ENCODE measurements at regions of chr1 and their contacts with region 1.

Region 1: DNA sequence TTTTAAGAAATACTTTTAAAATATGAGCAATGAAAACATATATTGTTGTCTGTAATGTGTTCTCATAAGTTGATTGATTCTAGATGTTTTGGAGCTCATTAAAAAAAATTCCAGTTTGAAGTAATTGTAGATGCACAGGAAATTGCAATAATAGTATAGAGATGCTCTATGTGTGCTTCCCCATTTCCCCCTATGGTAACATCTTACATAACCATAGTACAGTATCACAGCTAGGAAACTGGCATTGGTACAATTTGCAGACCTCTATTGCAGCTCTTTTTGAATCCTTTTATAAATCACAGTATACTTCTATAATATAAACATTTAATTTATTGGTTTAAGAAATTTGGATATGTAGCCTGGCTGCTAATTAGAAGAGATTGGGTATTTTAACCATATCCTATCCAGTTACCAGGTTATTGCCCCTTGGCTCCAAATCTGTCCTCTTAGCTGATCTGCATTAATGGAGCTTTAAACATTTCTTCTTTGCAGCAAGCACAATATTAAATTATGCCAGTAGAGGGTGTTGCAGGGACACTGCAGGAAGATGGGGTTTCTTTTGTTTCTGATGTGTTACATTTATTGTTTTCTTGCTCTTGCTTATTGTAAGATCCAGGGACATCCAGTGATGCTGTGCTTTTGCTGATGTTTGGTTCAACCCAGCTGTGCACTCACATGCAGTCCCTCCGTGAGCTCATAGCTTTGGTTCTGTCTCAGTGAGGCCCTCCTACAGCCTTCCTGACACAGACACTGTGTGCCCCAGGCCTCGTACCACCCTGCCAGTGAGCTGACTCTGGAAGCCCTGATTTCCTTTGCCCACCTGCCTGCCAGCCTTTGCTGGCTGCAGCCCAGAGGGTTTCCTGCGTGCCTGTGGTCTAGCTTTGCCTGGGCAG is 103.3 kb downstream of the RABGAP1L start:
- DNase-seq: no peak
- ATAC-seq: peak; percentile 52 to 58
- H3K4me3 ChIP-seq: no peak overlapping the region
- H3K27ac ChIP-seq: peak overlapping the region; percentile 48
- H3K4me1 ChIP-seq: no peaks in the 10 kb centered on the region
- H3K27me3 ChIP-seq: no peaks in the 10 kb centered on the region

Region 2: DNA sequence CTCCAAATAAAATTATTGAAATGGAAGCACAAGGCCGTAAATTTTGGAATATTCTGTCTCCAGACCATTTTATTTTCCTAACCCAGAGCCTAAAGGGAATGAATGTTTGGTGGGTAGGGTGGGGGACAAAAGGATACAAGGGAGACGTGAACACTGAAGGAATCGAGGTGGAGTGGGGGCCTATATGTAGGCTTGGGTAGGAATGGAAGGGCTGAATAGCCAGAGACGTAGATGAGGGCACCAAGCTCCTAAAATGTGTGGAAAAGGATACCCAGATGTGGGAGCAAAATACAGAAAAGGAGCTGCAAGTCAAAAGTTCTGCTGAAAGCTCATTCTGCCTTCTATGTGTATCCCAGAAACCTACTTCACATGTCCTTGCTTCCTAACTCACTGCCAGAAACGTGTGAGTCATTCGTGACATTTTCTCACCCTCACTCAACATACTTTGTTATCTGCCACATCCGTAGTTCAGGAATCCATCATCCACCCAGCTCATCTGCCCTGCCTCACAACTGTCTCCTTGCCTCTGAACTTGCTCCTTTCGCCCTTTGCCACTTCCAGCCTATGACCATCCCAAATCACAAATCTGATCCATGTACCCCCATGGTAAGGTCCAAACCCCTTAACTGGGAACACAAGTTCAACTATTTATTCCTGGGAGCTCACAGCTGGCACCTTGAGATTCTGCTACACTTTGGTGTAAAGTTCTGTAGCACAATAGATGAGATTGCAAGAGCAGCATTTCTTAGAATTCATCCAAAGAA is 869.5 kb before region 1 on chr1:
- intact Hi-C with region 1: no loop called
- DNase-seq: no peak
- ATAC-seq: peak; percentile 71 to 90
- H3K4me3 ChIP-seq: no peak overlapping the region
- H3K27ac ChIP-seq: peak overlapping the region; percentile 80
- H3K4me1 ChIP-seq: no peaks in the 10 kb centered on the region
- H3K27me3 ChIP-seq: no peaks in the 10 kb centered on the region

Region 3: DNA sequence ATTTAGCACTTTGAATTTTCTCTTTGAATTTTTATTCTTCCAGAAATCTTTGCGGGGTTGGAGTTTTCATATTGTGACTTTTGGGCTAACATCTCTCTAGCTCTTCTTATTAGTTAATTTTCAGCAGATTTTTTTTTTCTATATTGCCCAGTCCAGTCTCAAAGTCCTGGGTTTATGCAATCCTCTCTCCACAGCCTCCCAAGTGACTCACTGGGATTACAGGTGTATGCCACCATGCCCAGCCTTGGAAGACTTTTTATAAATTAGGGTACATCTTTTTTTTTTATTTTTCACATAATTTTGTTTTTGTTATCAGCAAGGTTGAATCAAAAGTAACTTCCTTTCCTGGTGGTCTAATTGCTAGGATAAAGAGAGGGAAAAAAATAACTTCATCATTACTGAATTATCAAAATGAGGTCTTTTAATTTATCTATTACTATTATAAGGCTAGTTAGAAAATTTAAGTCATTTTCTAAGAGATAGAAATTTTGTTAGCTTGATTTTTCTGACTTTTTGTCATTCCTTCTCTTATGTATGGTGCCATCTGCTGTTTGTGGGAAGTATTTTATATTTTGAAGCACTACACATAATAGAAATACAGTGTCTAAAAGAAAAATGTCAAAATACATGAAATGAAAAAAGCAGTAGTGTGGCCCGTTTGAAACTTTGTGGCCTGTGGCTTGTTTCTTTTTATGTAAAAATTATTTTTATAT is 463.7 kb after region 1 on chr1:
- intact Hi-C with region 1: loop called in 1 of 4 experiments (anchors 5 kb)
- DNase-seq: no peak
- ATAC-seq: no peak
- H3K4me3 ChIP-seq: no peak overlapping the region
- H3K27ac ChIP-seq: no peak overlapping the region
- H3K4me1 ChIP-seq: no peaks in the 10 kb centered on the region
- H3K27me3 ChIP-seq: no peaks in the 10 kb centered on the region

Region 4: DNA sequence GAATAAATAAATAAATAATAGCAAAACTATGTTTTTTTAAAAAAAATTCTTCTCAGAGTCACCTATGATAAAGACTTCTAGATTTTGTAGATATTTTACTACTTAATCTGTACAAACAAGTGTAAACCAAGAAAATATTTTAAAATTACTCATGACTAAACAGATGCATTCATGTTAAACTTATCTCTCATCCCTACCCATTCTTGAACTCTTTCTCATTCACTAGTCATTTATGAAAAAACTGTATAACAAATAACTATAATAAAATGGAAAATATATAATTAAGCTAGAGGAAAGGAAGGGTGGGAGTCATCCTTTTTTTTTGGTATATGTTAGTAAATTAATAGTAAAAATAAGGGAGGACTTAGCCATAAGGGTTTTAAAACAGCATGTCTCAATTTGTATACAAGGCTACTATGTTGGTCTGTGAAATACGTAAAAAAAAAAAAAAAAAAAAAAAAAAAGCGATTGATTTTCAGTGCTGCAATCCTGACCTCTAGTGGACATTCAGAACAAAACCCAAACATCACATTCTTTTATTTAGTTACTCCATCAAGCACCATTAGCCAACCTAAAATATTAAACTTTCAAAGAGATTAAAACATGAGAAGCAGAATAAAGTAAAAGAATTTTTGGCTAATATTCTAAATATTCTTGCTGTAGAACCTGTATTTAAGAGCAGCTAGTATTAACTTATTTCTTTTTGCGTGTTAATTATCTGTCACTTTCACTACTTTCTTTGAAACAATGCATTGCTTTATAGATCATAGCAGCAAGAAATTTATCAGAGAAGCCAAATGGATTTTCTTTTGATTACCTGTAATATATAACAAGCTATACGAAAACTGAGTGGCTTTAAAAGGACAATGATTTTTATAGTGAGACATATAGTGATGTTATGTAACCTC is 481.3 kb after region 1 on chr1:
- intact Hi-C with region 1: loop called (anchors 5 to 10 kb)
- DNase-seq: no peak
- ATAC-seq: peak in 1 of 2 donors; percentile 19
- H3K4me3 ChIP-seq: no peak overlapping the region
- H3K27ac ChIP-seq: no peak overlapping the region
- H3K4me1 ChIP-seq: no peaks in the 10 kb centered on the region
- H3K27me3 ChIP-seq: no peaks in the 10 kb centered on the region

Measured in right cardiac atrium (tissue), 5 donors.